T-cell (primary cell): ENCODE measurements at regions of chr22 and their contacts with region 1.

Region 1: GRCh38 chr22:50218996-50219727 is 18.4 kb downstream of the SELENOO start:
- DNase-seq: no peak
- ATAC-seq: peak in 1 of 4 experiments; percentile 26
- H3K4me3 ChIP-seq: no peak overlapping the region
- H3K4me3 Mint-ChIP-seq: no peak overlapping the region
- H3K27ac ChIP-seq: no peak overlapping the region
- H3K27ac Mint-ChIP-seq: no peak overlapping the region
- H3K4me1 ChIP-seq: no peaks in the 10 kb centered on the region
- H3K4me1 Mint-ChIP-seq: peaks cover 0 to 8% (median 4%) of the 10 kb centered on the region in 3 donors
- H3K27me3 ChIP-seq: no peaks in the 10 kb centered on the region
- H3K27me3 Mint-ChIP-seq: no peaks in the 10 kb centered on the region

Region 2: DNA sequence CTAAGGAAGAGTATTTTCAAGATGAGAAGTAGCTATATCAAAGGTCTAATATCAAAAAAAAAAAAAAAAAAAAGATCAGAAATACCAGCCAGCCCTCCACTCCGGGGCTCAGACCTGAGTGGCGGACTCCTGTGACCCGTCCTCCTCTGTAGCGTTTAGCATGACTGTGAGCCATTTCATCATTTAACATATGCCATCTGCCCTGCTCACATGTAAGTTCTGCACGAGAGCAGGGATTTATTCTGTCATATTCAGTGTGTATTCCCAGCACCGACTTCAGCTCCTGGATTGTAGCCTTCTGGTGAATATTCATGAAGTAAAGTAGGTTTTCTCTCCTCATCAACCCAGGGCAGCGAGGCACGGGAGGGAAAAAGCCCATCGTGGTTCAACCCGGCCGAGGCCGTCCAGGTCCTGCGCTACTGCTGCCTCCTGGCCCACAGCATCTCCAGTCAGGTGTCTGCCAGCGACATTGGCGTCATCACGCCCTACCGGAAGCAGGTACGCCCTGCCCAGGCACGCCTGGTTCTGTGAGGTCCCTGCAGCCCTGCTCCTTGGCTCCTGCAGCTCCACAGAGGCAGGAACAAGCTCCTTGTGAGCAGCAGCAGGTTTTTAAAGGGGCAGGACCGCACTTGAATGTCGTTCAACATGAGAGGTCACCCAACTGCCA is 61.3 kb before region 1 on chr22:
- CTCF ChIA-PET with region 1: no interaction called
- POLR2A ChIA-PET with region 1: no interaction called
- DNase-seq: no peak
- ATAC-seq: no peak
- H3K4me3 ChIP-seq: no peak overlapping the region
- H3K4me3 Mint-ChIP-seq: no peak overlapping the region
- H3K27ac ChIP-seq: no peak overlapping the region
- H3K27ac Mint-ChIP-seq: no peak overlapping the region
- H3K4me1 ChIP-seq: no peaks in the 10 kb centered on the region
- H3K4me1 Mint-ChIP-seq: no peaks in the 10 kb centered on the region
- H3K27me3 ChIP-seq: peaks cover 0 to 44% of the 10 kb centered on the region in 2 experiments
- H3K27me3 Mint-ChIP-seq: peaks cover 16 to 21% of the 10 kb centered on the region in 2 donors

Region 3: DNA sequence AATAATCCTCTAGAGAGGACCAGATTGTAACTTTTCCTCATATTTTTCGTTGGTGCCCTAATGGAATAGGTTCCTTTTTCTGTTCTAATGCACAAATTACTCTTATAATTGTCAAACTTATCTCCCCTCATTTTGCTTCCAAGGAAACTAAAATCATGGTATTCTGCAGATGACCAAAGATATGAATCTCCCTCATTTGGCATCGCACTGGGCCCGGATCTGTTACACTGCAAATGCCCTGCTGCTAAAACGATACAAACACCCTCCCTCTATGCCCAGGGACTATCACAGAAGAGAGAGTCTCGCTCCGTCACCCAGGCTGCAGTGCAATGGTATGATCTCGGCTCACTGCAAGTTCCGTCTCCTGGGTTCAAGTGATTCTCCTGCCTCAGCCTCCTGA is 334.1 kb after region 1 on chr22:
- CTCF ChIA-PET with region 1: no interaction called
- POLR2A ChIA-PET with region 1: interaction called in 1 of 2 experiments, 16 read pairs
- DNase-seq: no peak
- ATAC-seq: no peak
- H3K4me3 ChIP-seq: no peak overlapping the region
- H3K4me3 Mint-ChIP-seq: no peak overlapping the region
- H3K27ac ChIP-seq: no peak overlapping the region
- H3K27ac Mint-ChIP-seq: no peak overlapping the region
- H3K4me1 ChIP-seq: peaks cover 0 to 26% of the 10 kb centered on the region in 2 experiments
- H3K4me1 Mint-ChIP-seq: peaks cover 18 to 22% (median 19%) of the 10 kb centered on the region in 3 donors
- H3K27me3 ChIP-seq: no peaks in the 10 kb centered on the region
- H3K27me3 Mint-ChIP-seq: no peaks in the 10 kb centered on the region